ENCODE measurements at regions of chr2 and their contacts with region 1.

Region 1: GRCh38 chr2:219597552-219598307 is at the start of gene STK11IP:
- DNase-seq: peak; percentile 98
- H3K4me3 Mint-ChIP-seq: peak within 1 kb of the TSS; percentile 96
- H3K27ac Mint-ChIP-seq: peak within 1 kb of the TSS; percentile 98
- H3K4me1 Mint-ChIP-seq: no peaks in the 10 kb centered on the region
- H3K27me3 Mint-ChIP-seq: no peaks in the 10 kb centered on the region
- CTCF ChIP-seq: no peak
- total RNA-seq, gene STK11IP: 24.2 and 26.5 TPM in 2 replicates

Region 2: GRCh38 chr2:219314804-219315468 is 282.8 kb before region 1 on chr2:
- CTCF ChIA-PET with region 1: no interaction called
- POLR2A ChIA-PET with region 1: no interaction called
- intact Hi-C with region 1: no loop called
- DNase-seq: peak; percentile 10
- H3K4me3 Mint-ChIP-seq: no peak overlapping the region
- H3K27ac Mint-ChIP-seq: no peak overlapping the region
- H3K4me1 Mint-ChIP-seq: no peaks in the 10 kb centered on the region
- H3K27me3 Mint-ChIP-seq: peaks cover 15% of the 10 kb centered on the region
- CTCF ChIP-seq: no peak

Region 3: DNA sequence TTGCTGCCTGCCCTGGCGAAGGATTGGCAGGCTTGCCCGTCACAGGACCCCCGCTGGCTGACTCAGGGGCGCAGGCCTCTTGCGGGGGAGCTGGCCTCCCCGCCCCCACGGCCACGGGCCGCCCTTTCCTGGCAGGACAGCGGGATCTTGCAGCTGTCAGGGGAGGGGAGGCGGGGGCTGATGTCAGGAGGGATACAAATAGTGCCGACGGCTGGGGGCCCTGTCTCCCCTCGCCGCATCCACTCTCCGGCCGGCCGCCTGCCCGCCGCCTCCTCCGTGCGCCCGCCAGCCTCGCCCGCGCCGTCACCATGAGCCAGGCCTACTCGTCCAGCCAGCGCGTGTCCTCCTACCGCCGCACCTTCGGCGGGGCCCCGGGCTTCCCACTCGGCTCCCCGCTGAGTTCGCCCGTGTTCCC is 179.6 kb before region 1 on chr2 and contains the start of gene DES:
- CTCF ChIA-PET with region 1: no interaction called
- POLR2A ChIA-PET with region 1: no interaction called
- intact Hi-C with region 1: no loop called
- DNase-seq: no peak
- H3K4me3 Mint-ChIP-seq: no peak within 1 kb of the TSS
- H3K27ac Mint-ChIP-seq: no peak within 1 kb of the TSS
- H3K4me1 Mint-ChIP-seq: no peaks in the 10 kb centered on the region
- H3K27me3 Mint-ChIP-seq: no peaks in the 10 kb centered on the region
- CTCF ChIP-seq: no peak
- total RNA-seq, gene DES: not detected in 2 replicates

Region 4: GRCh38 chr2:219498280-219499057 is 99.3 kb before region 1 on chr2 and contains the start of gene GMPPA:
- CTCF ChIA-PET with region 1: interaction called, 4 read pairs
- POLR2A ChIA-PET with region 1: interaction called, 12 read pairs
- intact Hi-C with region 1: no loop called
- DNase-seq: peak; percentile 99
- H3K4me3 Mint-ChIP-seq: peak within 1 kb of the TSS; percentile 92
- H3K27ac Mint-ChIP-seq: peak within 1 kb of the TSS; percentile 93
- H3K4me1 Mint-ChIP-seq: peaks cover 24% of the 10 kb centered on the region
- H3K27me3 Mint-ChIP-seq: no peaks in the 10 kb centered on the region
- CTCF ChIP-seq: no peak
- total RNA-seq, gene GMPPA: 70.7 and 80.2 TPM in 2 replicates

Region 5: GRCh38 chr2:219543601-219544358 is 54.0 kb before region 1 on chr2 and contains the starts of genes CHPF and TMEM198:
- CTCF ChIA-PET with region 1: interaction called, 15 read pairs
- POLR2A ChIA-PET with region 1: interaction called, 35 read pairs
- intact Hi-C with region 1: loop called (anchors 1 kb)
- DNase-seq: peak; percentile 98
- H3K4me3 Mint-ChIP-seq: peak within 1 kb of the TSS; percentile 75
- H3K27ac Mint-ChIP-seq: peak within 1 kb of the TSS; percentile 57
- H3K4me1 Mint-ChIP-seq: peaks cover 12% of the 10 kb centered on the region
- H3K27me3 Mint-ChIP-seq: no peaks in the 10 kb centered on the region
- CTCF ChIP-seq: no peak
- total RNA-seq, gene CHPF: 81.2 and 105 TPM in 2 replicates
- total RNA-seq, gene TMEM198: 5.3 and 6.3 TPM in 2 replicates

Region 6: GRCh38 chr2:219560037-219560892 is 37.5 kb before region 1 on chr2:
- CTCF ChIA-PET with region 1: interaction called, 16 read pairs
- POLR2A ChIA-PET with region 1: interaction called, 5 read pairs
- intact Hi-C with region 1: no loop called
- DNase-seq: no peak
- H3K4me3 Mint-ChIP-seq: no peak overlapping the region
- H3K27ac Mint-ChIP-seq: no peak overlapping the region
- H3K4me1 Mint-ChIP-seq: no peaks in the 10 kb centered on the region
- H3K27me3 Mint-ChIP-seq: no peaks in the 10 kb centered on the region
- CTCF ChIP-seq: peak; percentile 80

Region 7: DNA sequence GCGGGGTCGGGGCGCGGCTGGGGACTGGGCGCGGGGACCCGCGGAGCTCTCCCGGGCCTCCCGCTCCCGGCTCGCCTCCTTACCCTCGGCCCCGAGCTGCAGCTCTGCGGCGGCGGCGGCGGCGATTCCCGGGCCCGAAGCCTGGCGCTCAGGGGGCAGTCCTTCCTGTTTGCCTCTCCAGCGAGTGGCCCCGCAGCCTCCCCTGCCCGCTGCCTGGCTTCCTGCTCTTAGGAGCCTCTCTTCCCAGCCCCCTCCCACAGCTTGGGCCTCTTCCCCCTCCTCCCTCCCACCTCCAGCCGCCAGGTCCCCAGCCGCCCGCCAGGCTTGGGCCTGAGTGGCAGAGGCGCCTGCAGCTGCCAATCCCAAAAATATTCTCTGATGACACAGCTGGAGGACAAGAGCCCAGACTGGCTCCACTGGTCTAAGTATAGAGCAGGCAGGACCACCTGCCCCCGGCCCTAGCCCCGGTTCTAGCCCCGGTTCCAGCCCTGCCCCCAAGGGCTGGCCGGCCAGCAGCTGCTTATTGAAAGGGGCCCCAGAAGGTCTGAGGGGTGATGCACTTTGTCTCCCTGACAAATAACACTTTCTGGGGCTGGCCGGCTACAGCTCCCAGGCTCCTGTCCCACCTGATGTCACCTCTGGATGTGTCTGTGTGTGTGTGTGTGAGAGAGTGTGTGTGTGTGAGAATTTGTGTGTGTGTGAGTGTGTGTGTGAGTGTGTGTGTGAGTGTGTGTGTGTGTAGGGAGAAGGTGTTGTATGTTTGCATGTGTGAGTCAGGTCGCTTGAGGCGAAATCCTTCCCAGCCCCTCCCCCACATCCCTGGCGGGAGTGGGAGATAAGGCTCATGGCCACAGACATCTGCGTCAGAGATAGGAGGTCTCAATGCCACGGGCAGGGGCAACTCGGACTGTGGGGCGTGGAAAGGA is 26.2 kb before region 1 on chr2 and contains the start of gene OBSL1:
- CTCF ChIA-PET with region 1: interaction called, 4 read pairs
- POLR2A ChIA-PET with region 1: interaction called, 49 read pairs
- intact Hi-C with region 1: no loop called
- DNase-seq: peak; percentile 60
- H3K4me3 Mint-ChIP-seq: peak within 1 kb of the TSS; percentile 49
- H3K27ac Mint-ChIP-seq: no peak within 1 kb of the TSS
- H3K4me1 Mint-ChIP-seq: peaks cover 7% of the 10 kb centered on the region
- H3K27me3 Mint-ChIP-seq: no peaks in the 10 kb centered on the region
- CTCF ChIP-seq: no peak
- total RNA-seq, gene OBSL1: 29.0 and 29.8 TPM in 2 replicates

Region 8: GRCh38 chr2:219578790-219579616 is 18.7 kb before region 1 on chr2:
- CTCF ChIA-PET with region 1: interaction called, 4 read pairs
- POLR2A ChIA-PET with region 1: interaction called, 12 read pairs
- intact Hi-C with region 1: no loop called
- DNase-seq: peak; percentile 74
- H3K4me3 Mint-ChIP-seq: peak overlapping the region; percentile 40
- H3K27ac Mint-ChIP-seq: peak overlapping the region; percentile 78
- H3K4me1 Mint-ChIP-seq: peaks cover 7% of the 10 kb centered on the region
- H3K27me3 Mint-ChIP-seq: no peaks in the 10 kb centered on the region
- CTCF ChIP-seq: no peak

Region 9: DNA sequence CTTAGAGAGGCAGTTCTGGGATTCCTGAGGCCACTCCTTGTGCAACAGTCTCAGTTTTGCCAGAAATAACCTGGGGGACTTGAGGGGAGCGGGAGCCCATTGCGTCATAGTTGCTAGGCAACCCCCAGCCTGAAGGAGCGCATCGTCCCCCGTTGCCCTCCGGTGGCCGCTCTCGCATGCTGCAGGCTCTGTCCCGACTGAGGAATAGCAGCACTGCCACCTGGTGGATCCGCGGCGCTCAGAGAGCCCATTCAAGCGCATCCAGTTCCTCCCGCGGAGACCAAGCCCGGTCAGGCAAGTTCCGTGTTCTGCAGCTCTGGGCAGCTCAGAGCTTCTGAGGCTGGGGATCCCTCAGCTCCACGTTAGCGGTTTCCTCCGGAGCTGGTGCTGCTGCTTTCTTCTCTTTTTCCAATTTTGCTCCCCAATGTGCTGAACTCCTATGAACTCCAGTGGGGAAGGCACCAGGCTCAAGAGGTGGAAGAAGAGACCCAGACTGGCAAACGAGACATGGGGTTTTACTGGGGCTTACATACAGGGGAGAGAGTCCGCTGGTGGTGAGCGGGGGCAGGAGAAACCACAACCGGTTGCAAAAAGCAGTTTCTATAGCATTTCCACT is 44.8 kb after region 1 on chr2:
- CTCF ChIA-PET with region 1: interaction called, 19 read pairs
- POLR2A ChIA-PET with region 1: interaction called, 19 read pairs
- intact Hi-C with region 1: no loop called
- DNase-seq: peak; percentile 95
- H3K4me3 Mint-ChIP-seq: no peak overlapping the region
- H3K27ac Mint-ChIP-seq: no peak overlapping the region
- H3K4me1 Mint-ChIP-seq: peaks cover 12% of the 10 kb centered on the region
- H3K27me3 Mint-ChIP-seq: no peaks in the 10 kb centered on the region
- CTCF ChIP-seq: peak; percentile 96